MCF 10A (cell line): ENCODE measurements at regions of chr17 and their contacts with region 1.

Region 1: GRCh38 chr17:64145757-64146417 is 15.9 kb upstream of the ERN1 start:
- DNase-seq: peak; percentile 99
- H3K4me3 Mint-ChIP-seq: no peak overlapping the region
- H3K27ac Mint-ChIP-seq: no peak overlapping the region
- H3K4me1 Mint-ChIP-seq: peaks cover 23% of the 10 kb centered on the region
- H3K27me3 Mint-ChIP-seq: no peaks in the 10 kb centered on the region
- CTCF ChIP-seq: no peak

Region 2: GRCh38 chr17:64025732-64026294 is 120.1 kb before region 1 on chr17:
- CTCF ChIA-PET with region 1: interaction called, 5 read pairs
- POLR2A ChIA-PET with region 1: interaction called, 23 read pairs
- intact Hi-C with region 1: no loop called
- DNase-seq: peak; percentile 69
- H3K4me3 Mint-ChIP-seq: peak overlapping the region; percentile 21
- H3K27ac Mint-ChIP-seq: no peak overlapping the region
- H3K4me1 Mint-ChIP-seq: peaks cover 7% of the 10 kb centered on the region
- H3K27me3 Mint-ChIP-seq: no peaks in the 10 kb centered on the region
- CTCF ChIP-seq: peak; percentile 84

Region 3: GRCh38 chr17:64117981-64118979 is 27.6 kb before region 1 on chr17:
- CTCF ChIA-PET with region 1: no interaction called
- POLR2A ChIA-PET with region 1: interaction called, 33 read pairs
- intact Hi-C with region 1: no loop called
- DNase-seq: peak; percentile 76
- H3K4me3 Mint-ChIP-seq: no peak overlapping the region
- H3K27ac Mint-ChIP-seq: no peak overlapping the region
- H3K4me1 Mint-ChIP-seq: peaks cover 44% of the 10 kb centered on the region
- H3K27me3 Mint-ChIP-seq: no peaks in the 10 kb centered on the region
- CTCF ChIP-seq: no peak

Region 4: DNA sequence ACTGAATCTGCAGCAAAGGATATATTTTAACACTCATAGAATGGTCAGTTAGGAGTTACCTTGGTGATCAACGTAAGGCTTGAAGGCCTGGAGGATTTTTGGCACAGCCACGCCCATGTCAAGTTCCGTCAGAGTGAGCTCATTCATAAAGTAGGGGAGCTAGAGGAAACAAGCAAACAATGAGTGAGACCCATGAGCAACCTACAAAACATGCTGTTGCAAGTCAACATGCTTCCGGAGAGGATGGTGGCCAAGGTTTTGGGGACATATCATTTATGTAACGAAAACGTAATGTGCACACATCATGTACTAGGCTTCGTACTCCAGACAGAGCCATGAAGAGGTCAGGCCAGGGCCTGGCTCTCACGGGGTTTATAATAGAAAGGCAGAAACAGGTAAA is 25.2 kb after region 1 on chr17:
- CTCF ChIA-PET with region 1: interaction called, 7 read pairs
- POLR2A ChIA-PET with region 1: interaction called, 10 read pairs
- intact Hi-C with region 1: no loop called
- DNase-seq: peak; percentile 59
- H3K4me3 Mint-ChIP-seq: no peak overlapping the region
- H3K27ac Mint-ChIP-seq: peak overlapping the region; percentile 50
- H3K4me1 Mint-ChIP-seq: peaks cover 26% of the 10 kb centered on the region
- H3K27me3 Mint-ChIP-seq: no peaks in the 10 kb centered on the region
- CTCF ChIP-seq: no peak

Region 5: DNA sequence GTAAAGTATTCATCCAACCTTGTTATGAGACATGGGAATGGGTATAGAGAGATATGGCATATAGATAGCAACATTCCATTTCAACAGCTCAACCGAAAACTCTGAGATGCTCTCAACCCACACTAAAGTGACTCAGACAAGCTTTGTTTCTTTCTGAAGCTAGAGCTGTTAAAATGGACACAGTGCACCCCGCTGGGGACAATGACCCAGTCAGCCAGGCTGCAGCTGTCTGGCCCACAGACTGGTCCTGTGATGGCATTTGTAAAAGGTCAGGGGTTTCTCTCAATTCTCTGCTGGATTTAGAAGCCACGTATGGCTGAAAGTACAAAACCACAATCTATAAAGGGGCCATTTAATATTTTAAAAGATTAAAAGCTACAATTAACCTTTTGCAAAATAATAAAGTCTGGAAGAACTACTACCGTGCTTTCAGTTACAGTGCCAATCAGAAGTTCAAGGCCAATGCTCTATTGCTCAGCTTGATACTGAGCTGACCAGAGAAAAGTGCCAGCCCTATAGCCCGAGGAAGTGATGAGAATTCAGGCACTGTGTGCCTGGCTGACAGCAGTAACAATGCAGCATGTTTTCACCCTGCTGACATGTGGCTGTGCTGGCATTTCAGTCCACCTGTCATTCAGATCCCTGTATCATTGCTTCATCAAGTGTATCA is 56.9 kb after region 1 on chr17:
- CTCF ChIA-PET with region 1: interaction called, 3 read pairs
- POLR2A ChIA-PET with region 1: interaction called, 66 read pairs
- intact Hi-C with region 1: no loop called
- DNase-seq: peak; percentile 29
- H3K4me3 Mint-ChIP-seq: no peak overlapping the region
- H3K27ac Mint-ChIP-seq: peak overlapping the region; percentile 55
- H3K4me1 Mint-ChIP-seq: peaks cover 42% of the 10 kb centered on the region
- H3K27me3 Mint-ChIP-seq: no peaks in the 10 kb centered on the region
- CTCF ChIP-seq: no peak

Region 6: GRCh38 chr17:64240741-64241347 is 95.0 kb after region 1 on chr17:
- CTCF ChIA-PET with region 1: no interaction called
- POLR2A ChIA-PET with region 1: interaction called, 94 read pairs
- intact Hi-C with region 1: no loop called
- DNase-seq: peak; percentile 64
- H3K4me3 Mint-ChIP-seq: no peak overlapping the region
- H3K27ac Mint-ChIP-seq: peak overlapping the region; percentile 76
- H3K4me1 Mint-ChIP-seq: peaks cover 52% of the 10 kb centered on the region
- H3K27me3 Mint-ChIP-seq: no peaks in the 10 kb centered on the region
- CTCF ChIP-seq: no peak

Region 7: GRCh38 chr17:64281962-64282727 is 136.3 kb after region 1 on chr17:
- CTCF ChIA-PET with region 1: interaction called, 53 read pairs
- POLR2A ChIA-PET with region 1: interaction called, 45 read pairs
- intact Hi-C with region 1: loop called (anchors 1 kb)
- DNase-seq: peak; percentile 72
- H3K4me3 Mint-ChIP-seq: no peak overlapping the region
- H3K27ac Mint-ChIP-seq: no peak overlapping the region
- H3K4me1 Mint-ChIP-seq: peaks cover 9% of the 10 kb centered on the region
- H3K27me3 Mint-ChIP-seq: no peaks in the 10 kb centered on the region
- CTCF ChIP-seq: peak; percentile 74

Region 8: GRCh38 chr17:64984851-64985521 is 839.1 kb after region 1 on chr17:
- CTCF ChIA-PET with region 1: no interaction called
- POLR2A ChIA-PET with region 1: no interaction called
- intact Hi-C with region 1: no loop called
- DNase-seq: no peak
- H3K4me3 Mint-ChIP-seq: no peak overlapping the region
- H3K27ac Mint-ChIP-seq: peak overlapping the region; percentile 33
- H3K4me1 Mint-ChIP-seq: no peaks in the 10 kb centered on the region
- H3K27me3 Mint-ChIP-seq: no peaks in the 10 kb centered on the region
- CTCF ChIP-seq: no peak